ENCODE measurements at regions of chr21 and their contacts with region 1.

Region 1: DNA sequence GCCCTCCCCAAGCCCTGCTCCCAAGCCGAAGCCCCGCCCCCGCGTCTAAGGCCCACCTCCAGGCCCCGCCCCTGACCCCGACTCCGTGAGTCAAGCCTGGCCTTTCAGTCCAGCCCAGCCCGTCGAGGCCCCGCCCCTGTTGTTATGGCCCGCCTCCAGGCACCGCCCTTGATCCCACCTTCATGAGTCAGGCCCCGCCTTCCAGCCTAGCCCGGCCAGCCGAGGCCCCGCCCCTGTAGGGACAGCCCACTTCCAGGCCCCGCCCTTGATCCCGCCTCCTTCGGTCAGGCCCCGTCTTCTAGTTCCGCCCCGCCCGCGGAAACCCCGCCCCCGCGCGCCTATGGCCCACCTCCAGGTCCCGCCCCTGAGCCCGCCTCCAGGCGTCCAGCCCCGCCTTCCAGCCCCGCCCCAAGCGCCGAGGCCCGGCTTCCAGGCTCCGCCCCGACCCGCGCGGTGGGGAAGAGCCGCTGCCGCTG is 247 bp upstream of the DOP1B start:
- DNase-seq: peak; percentile 98 to 100
- H3K4me3 ChIP-seq: peak overlapping the region; percentile 86 to 95
- H3K27ac ChIP-seq: peak overlapping the region; percentile 69 to 75
- H3K4me1 ChIP-seq: peaks cover 7 to 8% of the 10 kb centered on the region in 2 donors
- H3K27me3 ChIP-seq: no peaks in the 10 kb centered on the region
- CTCF ChIP-seq: no peak

Region 2: GRCh38 chr21:36060159-36060921 is 96.0 kb before region 1 on chr21 and contains the start of gene SETD4:
- intact Hi-C with region 1: loop called (anchors 1 kb)
- DNase-seq: peak; percentile 63 to 95
- H3K4me3 ChIP-seq: peak within 1 kb of the TSS; percentile 80 to 81
- H3K27ac ChIP-seq: peak within 1 kb of the TSS; percentile 91 to 93
- H3K4me1 ChIP-seq: peaks cover 0 to 11% of the 10 kb centered on the region in 2 donors
- H3K27me3 ChIP-seq: no peaks in the 10 kb centered on the region
- CTCF ChIP-seq: no peak
- total RNA-seq, gene SETD4: 35.9 TPM

Region 3: DNA sequence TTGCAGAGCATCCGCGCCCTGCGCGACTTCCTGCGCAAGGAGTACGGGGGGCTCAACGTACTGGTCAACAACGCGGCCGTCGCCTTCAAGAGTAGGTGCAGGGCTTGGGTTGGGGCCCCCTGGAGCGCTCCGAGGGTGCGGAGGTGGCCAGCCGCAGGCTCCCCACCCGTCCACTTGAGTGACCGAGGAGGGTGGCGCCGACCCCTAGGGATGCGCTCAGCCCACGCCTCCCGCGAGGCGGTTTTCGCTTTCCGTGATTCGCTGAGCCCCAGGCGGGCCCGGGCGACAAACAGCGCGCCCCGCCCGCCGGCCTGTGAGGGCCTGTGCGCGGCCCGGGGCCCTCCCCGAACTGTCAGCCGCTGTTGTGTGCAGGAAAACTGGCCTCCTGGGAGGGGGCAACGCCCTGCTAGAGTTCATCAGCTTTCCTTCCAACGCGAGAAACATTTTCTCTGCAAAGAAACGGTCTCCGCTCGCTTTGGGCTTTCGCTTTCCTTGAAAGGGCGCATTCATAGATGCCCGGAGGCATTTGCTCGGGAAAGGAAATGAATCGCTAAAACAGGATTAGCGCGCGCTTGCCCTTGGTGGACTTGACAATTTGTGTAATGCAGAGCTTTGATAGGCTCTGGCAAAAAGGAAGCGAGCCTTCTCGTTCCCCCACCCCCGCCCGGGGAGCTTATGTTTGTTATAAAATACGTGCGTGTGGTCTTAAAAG is 20.8 kb before region 1 on chr21:
- intact Hi-C with region 1: loop called (anchors 1 kb)
- DNase-seq: peak in 1 of 2 donors; percentile 83
- H3K4me3 ChIP-seq: peak overlapping the region; percentile 79 to 86
- H3K27ac ChIP-seq: peak overlapping the region; percentile 89 to 90
- H3K4me1 ChIP-seq: peaks cover 0 to 11% of the 10 kb centered on the region in 2 donors
- H3K27me3 ChIP-seq: no peaks in the 10 kb centered on the region
- CTCF ChIP-seq: no peak

Region 4: GRCh38 chr21:36169436-36170128 is 13.2 kb after region 1 on chr21:
- intact Hi-C with region 1: no loop called
- DNase-seq: no peak
- H3K4me3 ChIP-seq: no peak overlapping the region
- H3K27ac ChIP-seq: no peak overlapping the region
- H3K4me1 ChIP-seq: no peaks in the 10 kb centered on the region
- H3K27me3 ChIP-seq: no peaks in the 10 kb centered on the region
- CTCF ChIP-seq: no peak

Region 5: DNA sequence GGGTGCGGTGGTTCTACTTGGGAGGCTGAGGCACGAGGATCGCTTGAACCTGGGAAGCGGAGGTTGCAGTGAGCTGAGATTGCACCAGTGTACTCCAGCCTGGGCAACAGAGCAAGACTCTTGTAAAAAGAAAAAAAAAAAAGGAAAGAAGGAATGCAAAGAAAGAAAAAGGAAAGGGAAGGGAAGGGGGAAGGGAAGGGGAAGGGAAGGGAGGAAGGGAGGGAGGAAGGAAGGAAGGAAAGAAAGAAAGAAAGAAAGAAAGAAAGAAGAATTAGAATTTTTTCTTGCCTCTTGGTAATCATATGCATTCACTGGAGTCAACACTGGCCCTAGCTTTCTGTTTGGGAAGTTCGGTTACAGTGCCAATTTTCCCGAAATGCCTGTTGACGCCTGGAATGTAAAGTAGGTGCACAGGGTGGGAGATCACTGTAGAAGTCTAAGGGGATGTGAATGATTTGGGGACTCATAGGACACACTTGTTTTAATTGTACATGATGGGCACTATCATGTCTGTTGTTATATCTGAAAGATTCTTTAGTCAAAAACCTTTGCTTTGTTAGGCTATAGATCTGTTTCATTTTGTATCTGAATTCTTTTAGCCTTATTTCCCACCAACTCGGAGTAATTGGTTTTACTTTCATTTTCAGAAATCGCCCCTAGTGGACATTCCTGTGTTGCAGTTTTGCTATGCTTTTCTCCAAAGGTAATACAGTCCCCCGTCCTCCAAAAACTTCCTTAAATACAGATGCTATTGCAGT is 103.8 kb after region 1 on chr21:
- intact Hi-C with region 1: loop called (anchors 5 kb)
- DNase-seq: peak in 1 of 2 donors; percentile 69
- H3K4me3 ChIP-seq: peak overlapping the region; percentile 55 to 66
- H3K27ac ChIP-seq: peak overlapping the region; percentile 56 to 69
- H3K4me1 ChIP-seq: peaks cover 0 to 5% of the 10 kb centered on the region in 2 donors
- H3K27me3 ChIP-seq: no peaks in the 10 kb centered on the region
- CTCF ChIP-seq: peak; percentile 47 to 73 (median 71)

Region 6: DNA sequence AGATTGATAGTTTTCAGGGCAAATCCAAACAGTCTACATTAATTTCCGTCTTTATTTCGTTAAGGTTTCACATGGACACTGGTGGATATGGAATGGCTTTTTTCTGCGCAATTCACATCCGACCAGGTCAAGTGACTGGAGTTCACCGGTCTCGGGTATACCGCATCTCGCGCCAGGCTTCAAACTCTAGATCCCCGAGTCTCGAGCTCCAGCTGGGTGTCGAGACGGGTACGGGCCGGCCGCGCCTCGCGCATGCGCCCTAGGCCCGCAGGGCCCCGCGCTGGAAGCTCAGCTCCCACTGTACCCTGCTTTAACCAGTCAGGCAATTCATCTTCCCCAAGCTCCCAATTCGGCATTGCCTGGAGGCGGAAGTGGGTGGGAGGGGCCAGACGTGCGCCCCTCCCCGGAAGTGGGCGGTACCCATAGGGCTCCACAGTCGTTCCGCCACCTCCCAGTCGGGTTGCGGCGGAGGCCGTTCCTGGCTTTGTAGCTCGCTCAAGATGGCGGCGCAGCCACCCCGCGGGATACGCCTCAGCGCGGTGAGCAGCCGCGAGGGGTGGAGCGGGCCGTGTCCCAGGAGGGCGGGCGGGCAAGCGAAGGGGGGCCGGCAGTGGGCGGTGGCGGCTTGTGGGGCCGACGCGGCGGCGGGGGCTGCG is 163.5 kb after region 1 on chr21 and contains the start of gene MORC3:
- intact Hi-C with region 1: loop called (anchors 1 kb)
- DNase-seq: peak; percentile 94 to 99
- H3K4me3 ChIP-seq: peak within 1 kb of the TSS; percentile 87 to 91
- H3K27ac ChIP-seq: peak within 1 kb of the TSS; percentile 97
- H3K4me1 ChIP-seq: peaks cover 0 to 21% of the 10 kb centered on the region in 2 donors
- H3K27me3 ChIP-seq: no peaks in the 10 kb centered on the region
- CTCF ChIP-seq: no peak
- total RNA-seq, gene MORC3: 7.9 TPM

Region 7: GRCh38 chr21:36989699-36990507 is 833.5 kb after region 1 on chr21:
- intact Hi-C with region 1: loop called (anchors 10 kb)
- DNase-seq: peak; percentile 63 to 95
- H3K4me3 ChIP-seq: peak overlapping the region; percentile 61 to 80
- H3K27ac ChIP-seq: peak overlapping the region; percentile 93
- H3K4me1 ChIP-seq: peaks cover 0 to 3% of the 10 kb centered on the region in 2 donors
- H3K27me3 ChIP-seq: no peaks in the 10 kb centered on the region
- CTCF ChIP-seq: peak; percentile 71 to 95 (median 85)

Region 8: DNA sequence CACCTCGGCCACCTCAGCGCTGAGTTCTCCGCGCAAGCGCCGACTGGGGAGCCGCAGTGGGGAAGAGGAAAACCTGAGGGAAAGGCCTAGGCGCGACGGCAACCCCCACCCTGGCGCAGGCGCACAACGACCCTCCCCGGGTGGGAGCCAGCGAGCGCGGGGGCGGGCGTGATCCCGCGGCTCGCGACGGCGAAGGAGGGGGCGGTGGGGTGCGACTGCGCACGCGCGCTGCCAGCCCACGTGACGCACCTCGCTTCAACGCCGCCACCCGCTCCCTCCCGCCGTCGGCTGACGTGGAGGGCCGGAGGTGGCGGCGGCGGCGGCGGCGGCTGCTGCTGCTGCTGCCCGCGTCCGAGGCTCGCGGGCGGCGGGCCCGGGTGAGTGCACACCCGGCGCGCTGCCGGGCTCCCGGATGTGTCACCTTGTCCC is 916.6 kb after region 1 on chr21 and contains the starts of genes PIGP and TTC3:
- intact Hi-C with region 1: loop called (anchors 5 kb)
- DNase-seq: peak; percentile 73 to 96
- H3K4me3 ChIP-seq: peak within 1 kb of the TSS; percentile 84 to 96
- H3K27ac ChIP-seq: peak within 1 kb of the TSS; percentile 95 to 100
- H3K4me1 ChIP-seq: peaks cover 0 to 15% of the 10 kb centered on the region in 2 donors
- H3K27me3 ChIP-seq: no peaks in the 10 kb centered on the region
- CTCF ChIP-seq: no peak
- total RNA-seq, gene PIGP: 0.64 TPM
- total RNA-seq, gene TTC3: 70.7 TPM